ENCODE measurements at regions of chr1 and their contacts with region 1.

Region 1: GRCh38 chr1:52727114-52727586 is 897 bp downstream of the ZYG11B start:
- DNase-seq: no peak
- H3K4me3 ChIP-seq: peak overlapping the region; percentile 88
- CTCF ChIP-seq: no peak

Region 2: GRCh38 chr1:52748119-52748518 is 21.0 kb after region 1 on chr1:
- CTCF ChIA-PET with region 1: interaction called, 12 read pairs
- POLR2A ChIA-PET with region 1: no interaction called
- DNase-seq: no peak
- H3K4me3 ChIP-seq: no peak overlapping the region
- CTCF ChIP-seq: no peak

Measured in AG04449 (cell line).